AG04449 (cell line): ENCODE measurements at regions of chr5 and their contacts with region 1.

Region 1: DNA sequence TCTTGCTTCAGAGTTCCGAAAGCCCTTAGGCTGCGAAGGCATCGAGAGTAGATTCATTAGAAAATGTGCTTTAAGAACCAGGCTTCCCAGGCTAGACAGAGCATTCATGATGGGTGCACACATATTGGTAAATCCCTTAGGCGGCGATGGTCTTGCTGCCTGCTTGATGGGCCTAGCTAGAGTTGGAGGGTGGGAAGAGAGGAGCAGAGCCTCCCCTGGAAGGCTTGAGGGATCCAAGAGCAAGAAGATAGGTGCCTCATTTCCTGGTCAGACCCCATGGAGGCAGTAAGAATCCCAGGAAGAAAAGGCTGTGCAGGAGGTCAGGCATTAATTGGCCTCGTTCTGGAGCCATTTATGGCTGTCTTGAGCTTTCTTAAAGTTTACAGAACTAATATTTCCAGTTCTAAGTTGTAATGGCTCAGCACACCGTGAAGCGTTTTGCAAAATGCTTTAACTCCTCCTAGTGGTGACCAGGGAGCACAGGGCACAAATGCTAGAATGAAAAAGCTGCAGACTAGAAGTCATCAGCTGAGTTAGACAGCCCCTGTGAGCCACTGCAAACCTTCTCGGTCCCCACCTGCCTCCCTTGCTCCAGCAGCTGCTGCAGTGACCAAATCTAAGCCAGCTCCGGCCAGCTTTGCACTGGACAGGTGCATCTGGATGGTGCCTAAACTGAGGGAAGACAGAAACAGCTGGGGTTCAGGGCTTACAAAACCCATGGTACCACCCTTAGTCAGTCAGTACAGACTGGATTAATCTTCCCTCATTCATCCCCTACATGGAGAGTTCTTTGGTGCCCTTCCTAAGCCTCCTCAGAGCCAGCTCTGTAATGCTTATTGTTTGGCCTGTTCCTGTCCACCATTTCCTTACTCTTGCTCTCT is 14.7 kb downstream of the SLC45A2 start:
- DNase-seq: no peak
- H3K4me3 ChIP-seq: no peak overlapping the region
- CTCF ChIP-seq: peak; percentile 81

Region 2: DNA sequence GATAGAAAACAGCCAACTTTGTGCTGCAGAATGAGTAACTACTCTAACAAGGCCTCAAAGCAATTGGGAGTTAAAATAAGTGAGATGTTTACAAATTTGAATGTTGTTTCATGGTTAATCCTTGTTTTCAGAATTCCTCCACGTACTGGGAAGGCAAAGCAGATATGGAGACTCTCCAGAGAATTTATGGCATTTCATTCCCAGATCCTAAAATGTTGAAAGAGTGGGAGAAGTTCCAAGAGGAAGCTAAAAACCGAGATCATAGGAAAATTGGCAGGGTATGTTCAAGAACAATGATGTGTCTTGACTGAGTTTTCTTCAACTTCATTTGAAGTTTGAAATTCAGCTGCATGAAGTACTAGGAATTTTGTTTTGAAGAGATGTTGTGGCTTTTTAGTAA is 512.7 kb before region 1 on chr5:
- CTCF ChIA-PET with region 1: interaction called, 17 read pairs
- POLR2A ChIA-PET with region 1: no interaction called
- DNase-seq: no peak
- H3K4me3 ChIP-seq: no peak overlapping the region
- CTCF ChIP-seq: no peak

Region 3: GRCh38 chr5:33479311-33479710 is 490.5 kb before region 1 on chr5:
- CTCF ChIA-PET with region 1: interaction called, 32 read pairs
- POLR2A ChIA-PET with region 1: no interaction called
- DNase-seq: no peak
- H3K4me3 ChIP-seq: no peak overlapping the region
- CTCF ChIP-seq: no peak

Region 4: GRCh38 chr5:33690374-33691135 is 279.3 kb before region 1 on chr5:
- CTCF ChIA-PET with region 1: interaction called, 10 read pairs
- POLR2A ChIA-PET with region 1: no interaction called
- DNase-seq: peak; percentile 89
- H3K4me3 ChIP-seq: no peak overlapping the region
- CTCF ChIP-seq: no peak

Region 5: GRCh38 chr5:33958176-33958575 is 11.6 kb before region 1 on chr5:
- CTCF ChIA-PET with region 1: interaction called, 82 read pairs
- POLR2A ChIA-PET with region 1: no interaction called
- DNase-seq: no peak
- H3K4me3 ChIP-seq: no peak overlapping the region
- CTCF ChIP-seq: no peak

Region 6: DNA sequence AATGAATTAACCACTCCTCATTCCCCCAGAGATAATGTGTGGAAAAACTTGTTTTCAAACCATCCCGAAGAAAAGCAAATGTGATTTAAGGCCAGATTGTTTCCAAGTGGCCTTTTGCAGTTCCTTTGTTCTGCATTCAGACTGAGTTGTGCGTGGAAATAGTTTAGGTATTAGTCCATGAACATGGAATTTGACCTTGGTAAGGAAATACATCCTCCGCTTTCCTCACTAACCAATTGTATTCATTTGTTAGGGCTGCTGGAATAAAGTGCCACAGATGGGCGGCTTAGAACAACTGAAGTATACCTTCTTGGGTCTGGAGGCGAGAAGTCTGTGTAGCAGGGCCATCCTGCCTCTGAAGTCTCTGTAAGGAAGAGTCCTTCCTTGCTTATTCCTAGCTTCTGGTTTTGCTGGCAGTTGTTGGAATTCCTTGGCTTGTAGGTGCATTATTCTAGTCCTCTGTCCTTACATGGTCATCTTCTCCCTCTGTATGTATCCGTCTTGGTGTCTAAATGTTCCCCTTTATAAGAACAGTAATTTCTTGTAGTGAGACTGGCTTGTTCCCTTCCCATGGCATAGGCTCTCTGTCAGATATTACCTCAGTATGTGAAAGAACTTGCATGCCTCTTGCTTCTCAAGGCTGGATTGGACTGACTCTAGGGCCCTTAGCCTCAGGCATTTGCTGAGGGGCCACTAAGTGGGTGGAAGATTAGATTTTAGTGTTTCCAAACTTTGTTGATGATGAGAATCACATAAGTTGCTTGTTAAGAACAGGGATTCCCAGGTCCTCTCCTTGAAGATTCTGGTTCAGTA is 740.3 kb after region 1 on chr5:
- CTCF ChIA-PET with region 1: no interaction called
- POLR2A ChIA-PET with region 1: no interaction called
- DNase-seq: no peak
- H3K4me3 ChIP-seq: no peak overlapping the region
- CTCF ChIP-seq: no peak